Activated CD4-positive, alpha-beta T cell treated with anti-CD3 and anti-CD28 coated beads for 36 hours (primary cell): ENCODE measurements at regions of chr1 and their contacts with region 1.

Region 1: DNA sequence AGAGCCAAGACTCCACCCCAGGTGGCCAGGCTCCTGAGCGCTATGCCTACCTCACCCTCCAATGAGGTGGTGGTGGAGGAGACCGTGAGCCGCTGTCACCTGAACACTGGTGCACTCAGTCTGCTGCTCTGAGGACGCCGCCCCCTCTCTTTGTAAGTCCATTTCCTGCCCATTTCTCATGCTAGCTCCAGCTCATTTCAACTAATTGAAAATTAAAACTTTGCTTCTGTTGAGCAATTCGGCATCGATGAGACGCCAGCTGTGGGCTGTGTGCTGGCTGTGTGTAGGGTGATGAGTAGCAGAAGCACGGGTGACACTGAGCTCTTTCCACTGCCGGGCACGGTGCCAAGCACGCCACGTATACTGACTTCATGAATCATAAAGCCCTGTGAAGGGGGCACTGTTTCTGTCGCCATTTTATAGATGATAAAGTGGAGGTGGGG is 11.2 kb downstream of the TNFRSF1B start:
- DNase-seq: peak; percentile 97
- ATAC-seq: peak; percentile 78
- H3K4me3 Mint-ChIP-seq: peak overlapping the region; percentile 63
- H3K27ac Mint-ChIP-seq: peak overlapping the region; percentile 96
- H3K4me1 Mint-ChIP-seq: peaks cover 86% of the 10 kb centered on the region
- H3K27me3 Mint-ChIP-seq: no peaks in the 10 kb centered on the region

Region 2: GRCh38 chr1:11934302-11935056 is 243.5 kb before region 1 on chr1 and contains the start of gene PLOD1:
- CTCF ChIA-PET with region 1: no interaction called
- POLR2A ChIA-PET with region 1: no interaction called
- intact Hi-C with region 1: loop called in 1 of 2 experiments (anchors 5 kb)
- DNase-seq: peak; percentile 88
- ATAC-seq: peak; percentile 98
- H3K4me3 Mint-ChIP-seq: peak within 1 kb of the TSS; percentile 75
- H3K27ac Mint-ChIP-seq: no peak within 1 kb of the TSS
- H3K4me1 Mint-ChIP-seq: peaks cover 4% of the 10 kb centered on the region
- H3K27me3 Mint-ChIP-seq: no peaks in the 10 kb centered on the region
- total RNA-seq, gene PLOD1: 11.7 to 11.9 TPM

Region 3: DNA sequence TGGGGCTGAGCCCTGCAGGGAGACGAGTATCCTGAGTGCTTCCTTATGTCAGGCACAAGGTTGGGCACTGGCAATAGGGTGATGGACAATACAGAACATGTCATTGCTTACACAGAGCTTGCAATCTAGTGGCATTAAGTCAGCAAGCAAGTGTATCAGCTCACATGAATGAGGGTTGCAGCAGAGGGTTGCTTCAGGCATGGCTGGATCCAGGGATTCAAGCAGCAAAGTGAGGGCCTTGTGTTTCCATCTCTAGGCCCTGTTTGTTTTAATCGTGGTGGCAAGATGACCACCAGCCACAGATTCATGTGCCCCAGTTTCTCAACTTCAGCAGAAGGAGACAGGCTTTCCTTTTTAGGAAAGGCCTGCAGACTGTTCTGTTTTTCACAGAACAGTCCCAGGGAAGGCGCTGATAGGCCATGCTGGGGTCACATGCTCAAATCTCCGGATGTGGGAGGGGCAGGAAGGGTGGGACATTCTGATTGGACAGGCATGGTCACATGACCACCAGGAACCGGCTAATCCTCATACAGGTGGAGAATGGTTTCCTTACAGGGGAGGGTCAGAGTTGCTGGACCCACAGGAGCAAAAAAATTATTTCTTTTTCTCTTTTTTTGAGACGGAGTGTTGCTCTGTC is 229.1 kb before region 1 on chr1:
- CTCF ChIA-PET with region 1: no interaction called
- POLR2A ChIA-PET with region 1: no interaction called
- intact Hi-C with region 1: no loop called
- DNase-seq: peak; percentile 46
- ATAC-seq: peak; percentile 33
- H3K4me3 Mint-ChIP-seq: no peak overlapping the region
- H3K27ac Mint-ChIP-seq: no peak overlapping the region
- H3K4me1 Mint-ChIP-seq: no peaks in the 10 kb centered on the region
- H3K27me3 Mint-ChIP-seq: no peaks in the 10 kb centered on the region

Region 4: GRCh38 chr1:12047120-12047876 is 130.7 kb before region 1 on chr1:
- CTCF ChIA-PET with region 1: no interaction called
- POLR2A ChIA-PET with region 1: no interaction called
- intact Hi-C with region 1: loop called in 1 of 2 experiments (anchors 2 kb)
- DNase-seq: peak; percentile 86
- ATAC-seq: peak; percentile 79
- H3K4me3 Mint-ChIP-seq: no peak overlapping the region
- H3K27ac Mint-ChIP-seq: no peak overlapping the region
- H3K4me1 Mint-ChIP-seq: peaks cover 22% of the 10 kb centered on the region
- H3K27me3 Mint-ChIP-seq: peaks cover 6% of the 10 kb centered on the region

Region 5: GRCh38 chr1:12166834-12167492 is 11.1 kb before region 1 on chr1 and contains the start of gene TNFRSF1B:
- CTCF ChIA-PET with region 1: interaction called, 5 read pairs
- POLR2A ChIA-PET with region 1: interaction called, 26 read pairs
- intact Hi-C with region 1: loop called in 1 of 2 experiments (anchors 1 kb)
- DNase-seq: peak; percentile 83
- ATAC-seq: peak; percentile 53
- H3K4me3 Mint-ChIP-seq: peak within 1 kb of the TSS; percentile 98
- H3K27ac Mint-ChIP-seq: peak within 1 kb of the TSS; percentile 99
- H3K4me1 Mint-ChIP-seq: peaks cover 63% of the 10 kb centered on the region
- H3K27me3 Mint-ChIP-seq: no peaks in the 10 kb centered on the region
- total RNA-seq, gene TNFRSF1B: 107 to 116 TPM

Region 6: GRCh38 chr1:12229835-12230548 is 52.0 kb after region 1 on chr1 and contains the start of gene VPS13D:
- CTCF ChIA-PET with region 1: interaction called, 4 read pairs
- POLR2A ChIA-PET with region 1: no interaction called
- intact Hi-C with region 1: loop called in 1 of 2 experiments (anchors 1 kb)
- DNase-seq: peak; percentile 93
- ATAC-seq: peak; percentile 92
- H3K4me3 Mint-ChIP-seq: peak within 1 kb of the TSS; percentile 83
- H3K27ac Mint-ChIP-seq: peak within 1 kb of the TSS; percentile 47
- H3K4me1 Mint-ChIP-seq: peaks cover 23% of the 10 kb centered on the region
- H3K27me3 Mint-ChIP-seq: no peaks in the 10 kb centered on the region
- total RNA-seq, gene VPS13D: 20.6 to 22.9 TPM

Region 7: GRCh38 chr1:12369258-12369657 is 191.2 kb after region 1 on chr1:
- CTCF ChIA-PET with region 1: no interaction called
- POLR2A ChIA-PET with region 1: no interaction called
- intact Hi-C with region 1: no loop called
- DNase-seq: no peak
- ATAC-seq: no peak
- H3K4me3 Mint-ChIP-seq: no peak overlapping the region
- H3K27ac Mint-ChIP-seq: no peak overlapping the region
- H3K4me1 Mint-ChIP-seq: peaks cover 7% of the 10 kb centered on the region
- H3K27me3 Mint-ChIP-seq: no peaks in the 10 kb centered on the region

Region 8: GRCh38 chr1:12619792-12620487 is 441.9 kb after region 1 on chr1:
- CTCF ChIA-PET with region 1: no interaction called
- POLR2A ChIA-PET with region 1: no interaction called
- intact Hi-C with region 1: loop called in 1 of 2 experiments (anchors 2 kb)
- DNase-seq: peak; percentile 88
- ATAC-seq: peak; percentile 39
- H3K4me3 Mint-ChIP-seq: peak overlapping the region; percentile 95
- H3K27ac Mint-ChIP-seq: no peak overlapping the region
- H3K4me1 Mint-ChIP-seq: peaks cover 43% of the 10 kb centered on the region
- H3K27me3 Mint-ChIP-seq: no peaks in the 10 kb centered on the region